ENCODE measurements at regions of chr19 and their contacts with region 1.

Region 1: GRCh38 chr19:49640113-49640898 is at the start of gene RRAS:
- H3K4me3 Mint-ChIP-seq: peak within 1 kb of the TSS; percentile 99
- H3K27ac Mint-ChIP-seq: peak within 1 kb of the TSS; percentile 100
- H3K4me1 Mint-ChIP-seq: peaks cover 70% of the 10 kb centered on the region
- H3K27me3 Mint-ChIP-seq: peaks cover 3% of the 10 kb centered on the region

Region 2: GRCh38 chr19:49497047-49497788 is 143.1 kb before region 1 on chr19:
- intact Hi-C with region 1: loop called (anchors 2 kb)
- H3K4me3 Mint-ChIP-seq: peak overlapping the region; percentile 99
- H3K27ac Mint-ChIP-seq: peak overlapping the region; percentile 99
- H3K4me1 Mint-ChIP-seq: peaks cover 34% of the 10 kb centered on the region
- H3K27me3 Mint-ChIP-seq: peaks cover 3% of the 10 kb centered on the region

Region 3: GRCh38 chr19:49590071-49590970 is 50.0 kb before region 1 on chr19:
- intact Hi-C with region 1: loop called (anchors 1 kb)
- H3K4me3 Mint-ChIP-seq: peak overlapping the region; percentile 84
- H3K27ac Mint-ChIP-seq: peak overlapping the region; percentile 82
- H3K4me1 Mint-ChIP-seq: peaks cover 42% of the 10 kb centered on the region
- H3K27me3 Mint-ChIP-seq: peaks cover 3% of the 10 kb centered on the region

Region 4: DNA sequence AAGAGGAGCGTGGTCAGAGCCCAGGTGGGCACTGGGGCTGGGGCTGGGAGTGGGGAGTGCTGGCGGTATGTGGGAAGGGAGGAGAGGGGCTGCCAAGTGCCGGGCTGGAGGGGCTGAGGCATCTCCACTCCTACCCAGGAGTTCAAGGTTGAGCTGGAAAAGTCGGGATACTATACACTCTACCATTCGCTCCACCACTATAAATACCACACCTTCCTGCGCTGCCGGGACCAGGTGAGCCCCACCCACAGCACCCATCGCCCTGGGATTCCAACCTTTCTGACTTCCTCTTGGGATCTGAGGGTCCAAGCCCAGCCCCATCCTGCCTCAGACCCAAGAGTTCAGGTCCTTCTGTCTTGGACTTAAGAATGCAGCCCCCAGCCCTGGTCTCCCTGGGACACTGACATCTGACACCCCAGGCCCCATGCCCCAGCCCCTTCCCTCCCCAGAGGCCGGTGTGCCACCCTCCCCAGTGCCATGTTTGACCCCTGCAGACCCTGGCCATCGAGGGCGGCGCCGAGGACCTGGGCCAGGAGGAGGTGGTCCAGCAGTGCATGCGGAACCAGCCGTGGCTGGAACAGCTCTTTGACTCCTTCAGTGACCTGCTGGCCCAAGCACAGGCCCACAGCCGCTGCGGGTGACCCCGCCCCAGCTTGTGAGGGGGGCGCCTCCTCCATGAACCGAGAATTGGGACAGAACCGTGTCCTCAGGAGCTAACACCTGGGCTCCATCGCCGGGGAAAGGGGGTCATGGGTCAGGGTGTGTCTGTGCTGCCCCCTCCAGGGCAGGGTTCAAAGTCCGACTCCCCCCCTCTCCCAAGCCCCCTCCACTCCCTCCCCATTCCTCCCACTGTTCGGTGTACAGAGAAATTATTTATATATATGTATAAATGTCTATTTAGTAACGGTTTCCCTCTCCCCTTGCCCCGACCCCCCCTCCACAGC is 15.1 kb before region 1 on chr19:
- intact Hi-C with region 1: no loop called
- H3K4me3 Mint-ChIP-seq: no peak overlapping the region
- H3K27ac Mint-ChIP-seq: no peak overlapping the region
- H3K4me1 Mint-ChIP-seq: no peaks in the 10 kb centered on the region
- H3K27me3 Mint-ChIP-seq: no peaks in the 10 kb centered on the region

Region 5: GRCh38 chr19:49676690-49677231 is 36.5 kb after region 1 on chr19:
- intact Hi-C with region 1: loop called (anchors 1 kb)
- H3K4me3 Mint-ChIP-seq: peak overlapping the region; percentile 92
- H3K27ac Mint-ChIP-seq: peak overlapping the region; percentile 100
- H3K4me1 Mint-ChIP-seq: peaks cover 48% of the 10 kb centered on the region
- H3K27me3 Mint-ChIP-seq: no peaks in the 10 kb centered on the region